ENCODE measurements at regions of chr10 and their contacts with region 1.

Region 1: GRCh38 chr10:101130984-101131961 is at the start of gene TLX1:
- DNase-seq: no peak
- H3K4me3 Mint-ChIP-seq: no peak within 1 kb of the TSS
- H3K27ac Mint-ChIP-seq: no peak within 1 kb of the TSS
- H3K4me1 Mint-ChIP-seq: peaks cover 6% of the 10 kb centered on the region
- H3K27me3 Mint-ChIP-seq: peaks cover 84% of the 10 kb centered on the region
- total RNA-seq, gene TLX1: not detected in 2 replicates

Region 2: GRCh38 chr10:99532687-99533495 is 1598.4 kb before region 1 on chr10 and contains the start of gene NKX2-3:
- intact Hi-C with region 1: loop called (anchors 5 kb)
- DNase-seq: no peak
- H3K4me3 Mint-ChIP-seq: no peak within 1 kb of the TSS
- H3K27ac Mint-ChIP-seq: no peak within 1 kb of the TSS
- H3K4me1 Mint-ChIP-seq: peaks cover 16% of the 10 kb centered on the region
- H3K27me3 Mint-ChIP-seq: peaks cover 89% of the 10 kb centered on the region
- total RNA-seq, gene NKX2-3: not detected in 2 replicates

Region 3: DNA sequence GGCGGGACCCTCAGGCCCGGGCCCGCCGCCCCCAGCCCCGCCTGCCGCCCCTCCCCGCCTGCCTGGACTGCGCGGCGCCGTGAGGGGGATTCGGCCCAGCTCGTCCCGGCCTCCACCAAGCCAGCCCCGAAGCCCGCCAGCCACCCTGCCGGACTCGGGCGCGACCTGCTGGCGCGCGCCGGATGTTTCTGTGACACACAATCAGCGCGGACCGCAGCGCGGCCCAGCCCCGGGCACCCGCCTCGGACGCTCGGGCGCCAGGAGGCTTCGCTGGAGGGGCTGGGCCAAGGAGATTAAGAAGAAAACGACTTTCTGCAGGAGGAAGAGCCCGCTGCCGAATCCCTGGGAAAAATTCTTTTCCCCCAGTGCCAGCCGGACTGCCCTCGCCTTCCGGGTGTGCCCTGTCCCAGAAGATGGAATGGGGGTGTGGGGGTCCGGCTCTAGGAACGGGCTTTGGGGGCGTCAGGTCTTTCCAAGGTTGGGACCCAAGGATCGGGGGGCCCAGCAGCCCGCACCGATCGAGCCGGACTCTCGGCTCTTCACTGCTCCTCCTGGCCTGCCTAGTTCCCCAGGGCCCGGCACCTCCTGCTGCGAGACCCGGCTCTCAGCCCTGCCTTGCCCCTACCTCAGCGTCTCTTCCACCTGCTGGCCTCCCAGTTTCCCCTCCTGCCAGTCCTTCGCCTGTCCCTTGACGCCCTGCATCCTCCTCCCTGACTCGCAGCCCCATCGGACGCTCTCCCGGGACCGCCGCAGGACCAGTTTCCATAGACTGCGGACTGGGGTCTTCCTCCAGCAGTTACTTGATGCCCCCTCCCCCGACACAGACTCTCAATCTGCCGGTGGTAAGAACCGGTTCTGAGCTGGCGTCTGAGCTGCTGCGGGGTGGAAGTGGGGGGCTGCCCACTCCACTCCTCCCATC is 303.2 kb before region 1 on chr10:
- intact Hi-C with region 1: loop called (anchors 5 kb)
- DNase-seq: no peak
- H3K4me3 Mint-ChIP-seq: peak overlapping the region; percentile 75
- H3K27ac Mint-ChIP-seq: peak overlapping the region; percentile 5
- H3K4me1 Mint-ChIP-seq: peaks cover 21% of the 10 kb centered on the region
- H3K27me3 Mint-ChIP-seq: peaks cover 75% of the 10 kb centered on the region

Region 4: DNA sequence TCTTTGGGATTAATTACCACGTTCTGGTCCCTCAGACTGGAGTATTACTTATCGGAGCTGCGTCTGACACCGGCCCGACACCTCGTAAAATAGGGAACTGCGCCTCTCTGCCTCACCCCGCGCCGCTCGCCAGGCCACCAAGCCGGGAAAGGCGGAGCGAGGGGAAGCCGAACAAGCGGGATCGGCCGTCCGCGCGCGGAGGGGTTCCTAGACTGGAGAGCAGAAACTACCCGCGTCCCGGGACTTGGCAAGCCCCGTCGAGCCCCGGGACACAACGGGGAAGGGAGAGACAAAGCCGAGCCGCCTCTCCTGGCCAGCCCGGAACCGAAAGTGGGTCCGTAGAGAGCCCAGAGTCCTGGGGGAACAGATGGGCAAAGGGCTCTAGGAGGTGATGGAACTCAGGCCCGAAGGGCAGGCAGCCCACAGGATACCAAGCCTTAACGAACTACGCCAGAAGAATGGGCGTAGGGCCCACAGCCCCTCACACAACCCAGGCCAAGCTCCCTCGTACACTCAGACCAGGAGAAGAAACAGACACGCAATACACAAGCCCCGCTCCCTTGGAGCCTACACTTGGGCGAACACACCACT is 91.5 kb after region 1 on chr10:
- intact Hi-C with region 1: loop called (anchors 2 kb)
- DNase-seq: no peak
- H3K4me3 Mint-ChIP-seq: no peak overlapping the region
- H3K27ac Mint-ChIP-seq: no peak overlapping the region
- H3K4me1 Mint-ChIP-seq: peaks cover 9% of the 10 kb centered on the region
- H3K27me3 Mint-ChIP-seq: peaks cover 84% of the 10 kb centered on the region

Region 5: GRCh38 chr10:101291331-101292193 is 160.3 kb after region 1 on chr10:
- intact Hi-C with region 1: loop called (anchors 5 kb)
- DNase-seq: no peak
- H3K4me3 Mint-ChIP-seq: peak overlapping the region; percentile 58
- H3K27ac Mint-ChIP-seq: no peak overlapping the region
- H3K4me1 Mint-ChIP-seq: no peaks in the 10 kb centered on the region
- H3K27me3 Mint-ChIP-seq: peaks cover 66% of the 10 kb centered on the region

Measured in activated T-helper 2 cell treated with anti-CD3 and anti-CD28 coated beads, Interferon-gamma antibody, Interleukin-2, Interleukin-4, amounts not matched to agents 10 μg/mL and 5 μg/mL and 100 μg/mL, durations not matched to agents 14 hours and 24 hours and 36 hours (primary cell).